Endothelial cell of umbilical vein (primary cell): ENCODE measurements at regions of chr2 and their contacts with region 1.

Region 1: DNA sequence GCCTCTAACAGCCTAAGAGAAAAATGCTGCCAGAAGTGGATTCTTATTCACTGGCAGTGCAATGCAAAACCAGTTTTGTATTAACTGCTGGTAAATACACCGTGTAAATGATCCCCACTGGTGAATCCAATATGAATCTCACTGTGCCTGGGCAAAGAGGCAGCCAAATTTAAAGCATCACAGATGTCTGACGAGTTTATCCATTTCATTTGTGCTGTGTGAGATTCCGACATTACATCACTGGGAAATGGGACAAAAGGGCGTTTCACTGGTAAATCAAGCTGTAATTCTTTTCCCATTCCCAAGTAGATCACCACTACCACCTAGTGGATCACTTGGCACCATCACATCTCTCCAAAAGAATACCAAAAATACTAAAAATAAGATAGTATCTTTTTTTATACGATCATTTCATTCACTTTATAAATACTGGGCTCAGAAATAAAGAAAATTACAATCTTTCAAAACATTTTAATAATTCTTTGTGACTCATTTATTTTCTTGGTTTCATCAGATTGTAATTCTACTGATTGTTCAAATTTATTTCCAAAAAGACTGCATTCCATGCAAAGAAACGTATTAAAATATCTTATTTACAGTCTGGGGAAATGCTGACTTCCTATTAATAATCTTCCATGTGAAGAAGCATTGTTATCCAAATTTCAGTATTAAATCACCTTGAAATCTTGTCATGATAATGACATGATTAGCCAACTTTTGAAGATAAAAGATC is 125.6 kb downstream of the GRB14 start:
- DNase-seq: peak; percentile 44
- H3K4me3 ChIP-seq: no peak overlapping the region
- H3K27ac ChIP-seq: no peak overlapping the region
- H3K4me1 ChIP-seq: peaks cover 7% of the 10 kb centered on the region
- H3K27me3 ChIP-seq: no peaks in the 10 kb centered on the region
- CTCF ChIP-seq: peak; percentile 34 to 41
- POLR2A ChIP-seq: no peak

Region 2: DNA sequence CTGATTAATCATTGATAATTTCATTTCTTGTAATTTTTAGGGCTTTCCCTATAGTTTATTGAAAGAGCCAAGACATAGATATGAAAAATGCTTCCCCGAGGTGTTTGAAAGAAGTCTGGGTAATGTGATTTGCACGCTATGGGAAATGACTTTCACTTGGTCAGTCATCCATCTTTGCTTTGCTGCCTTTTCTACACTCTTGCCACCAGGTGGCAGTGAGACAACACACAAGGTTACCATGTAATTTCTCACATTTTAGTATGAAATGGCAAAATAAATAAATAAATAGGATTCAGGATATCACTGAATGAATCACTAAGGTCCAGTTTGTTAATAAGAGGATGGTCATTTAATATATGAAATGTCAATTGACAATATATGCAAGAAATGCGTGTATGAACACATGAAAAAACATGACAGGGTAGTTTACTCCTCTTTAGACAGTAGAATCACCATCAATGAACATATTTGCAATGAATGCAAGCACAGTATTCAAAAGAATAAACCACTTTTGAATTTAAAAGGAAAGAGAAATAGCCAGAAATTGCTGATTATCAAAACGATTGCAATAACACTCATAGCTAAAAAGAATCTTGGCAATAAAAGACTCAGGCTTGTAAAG is 1604.9 kb before region 1 on chr2:
- CTCF ChIA-PET with region 1: interaction called, 6 read pairs
- POLR2A ChIA-PET with region 1: no interaction called
- dilution Hi-C with region 1: no loop called
- intact Hi-C with region 1: loop called (anchors 1 kb)
- DNase-seq: peak; percentile 65
- H3K4me3 ChIP-seq: no peak overlapping the region
- H3K27ac ChIP-seq: no peak overlapping the region
- H3K4me1 ChIP-seq: no peaks in the 10 kb centered on the region
- H3K27me3 ChIP-seq: no peaks in the 10 kb centered on the region
- CTCF ChIP-seq: peak; percentile 68 to 77
- POLR2A ChIP-seq: no peak

Region 3: GRCh38 chr2:163171786-163172531 is 1323.7 kb before region 1 on chr2:
- CTCF ChIA-PET with region 1: interaction called, 5 read pairs
- POLR2A ChIA-PET with region 1: no interaction called
- dilution Hi-C with region 1: no loop called
- intact Hi-C with region 1: loop called (anchors 1 kb)
- DNase-seq: no peak
- H3K4me3 ChIP-seq: no peak overlapping the region
- H3K27ac ChIP-seq: no peak overlapping the region
- H3K4me1 ChIP-seq: no peaks in the 10 kb centered on the region
- H3K27me3 ChIP-seq: no peaks in the 10 kb centered on the region
- CTCF ChIP-seq: no peak
- POLR2A ChIP-seq: no peak

Region 4: DNA sequence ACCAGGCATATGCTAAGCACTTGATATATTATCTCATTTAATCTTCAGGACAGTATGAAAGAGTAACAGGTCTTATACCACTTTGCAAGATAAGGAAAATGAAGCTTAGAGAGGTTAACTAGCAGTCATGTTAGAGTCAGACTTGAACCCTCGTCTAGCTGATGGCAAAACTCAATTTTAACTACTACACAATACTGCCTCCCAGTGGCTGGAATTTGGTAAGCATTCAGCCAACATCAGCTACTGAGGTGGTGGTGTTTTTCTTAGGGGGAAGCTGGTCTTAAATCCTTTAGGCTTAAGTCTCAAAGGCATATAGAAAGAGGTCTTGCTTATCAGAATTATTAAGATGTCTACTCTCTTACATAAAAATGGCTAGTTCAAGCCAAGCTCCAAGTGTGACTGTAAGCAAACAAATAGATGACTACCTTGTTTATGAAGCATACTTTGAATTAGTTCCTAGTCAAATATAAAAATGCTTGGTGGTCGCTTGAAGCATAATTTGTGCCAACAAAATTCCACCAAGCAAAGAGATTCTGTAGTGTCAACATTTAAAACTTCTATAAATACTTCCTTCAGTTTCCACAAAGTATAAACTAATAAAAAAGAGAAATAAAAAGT is 434.4 kb before region 1 on chr2:
- CTCF ChIA-PET with region 1: interaction called, 3 read pairs
- POLR2A ChIA-PET with region 1: no interaction called
- dilution Hi-C with region 1: no loop called
- intact Hi-C with region 1: loop called (anchors 2 kb)
- DNase-seq: peak; percentile 61
- H3K4me3 ChIP-seq: no peak overlapping the region
- H3K27ac ChIP-seq: no peak overlapping the region
- H3K4me1 ChIP-seq: no peaks in the 10 kb centered on the region
- H3K27me3 ChIP-seq: no peaks in the 10 kb centered on the region
- CTCF ChIP-seq: peak; percentile 53 to 58
- POLR2A ChIP-seq: no peak

Region 5: DNA sequence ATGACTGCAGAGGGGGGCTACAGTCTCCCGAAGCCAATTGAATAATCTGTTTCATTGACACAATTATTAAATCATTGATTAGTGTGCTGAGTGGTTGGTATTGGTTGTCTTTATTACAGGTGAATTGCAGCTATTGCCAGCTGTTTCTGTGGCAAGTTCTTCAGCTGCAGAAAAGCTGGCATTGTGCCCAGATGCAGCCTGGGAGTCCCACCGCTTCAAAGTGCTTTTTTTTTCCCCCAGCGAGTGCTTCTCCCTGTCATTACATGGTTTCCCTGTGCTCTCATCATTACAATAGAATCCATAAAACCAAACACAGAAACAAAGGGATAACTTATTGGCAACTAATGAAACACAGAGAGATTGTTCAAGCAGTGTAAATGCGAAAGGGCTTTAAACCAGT is 39.0 kb before region 1 on chr2:
- CTCF ChIA-PET with region 1: no interaction called
- POLR2A ChIA-PET with region 1: no interaction called
- dilution Hi-C with region 1: no loop called
- intact Hi-C with region 1: no loop called
- DNase-seq: peak; percentile 8
- H3K4me3 ChIP-seq: no peak overlapping the region
- H3K27ac ChIP-seq: no peak overlapping the region
- H3K4me1 ChIP-seq: no peaks in the 10 kb centered on the region
- H3K27me3 ChIP-seq: peaks cover 5 to 6% of the 10 kb centered on the region in 2 experiments
- CTCF ChIP-seq: no peak
- POLR2A ChIP-seq: no peak

Region 6: DNA sequence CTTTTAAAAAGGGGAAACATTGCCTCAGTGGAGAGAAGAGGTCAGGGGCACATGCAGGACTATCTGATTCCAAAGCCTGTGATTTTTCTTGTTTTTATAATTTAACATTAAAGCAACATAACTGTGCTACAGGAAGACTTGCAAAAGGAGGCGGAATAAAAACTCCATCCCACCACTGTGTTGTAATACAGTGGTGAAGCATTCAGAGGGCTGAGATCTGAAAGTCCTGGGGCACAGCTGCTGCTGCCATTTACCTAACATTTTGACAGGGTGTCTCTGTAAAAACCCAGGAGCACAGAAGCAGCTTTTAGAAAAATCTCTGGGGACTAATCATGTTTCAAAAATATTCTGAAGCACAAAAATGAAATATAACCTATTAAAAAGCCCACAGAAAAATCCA is 28.1 kb after region 1 on chr2:
- CTCF ChIA-PET with region 1: no interaction called
- POLR2A ChIA-PET with region 1: no interaction called
- dilution Hi-C with region 1: no loop called
- intact Hi-C with region 1: no loop called
- DNase-seq: no peak
- H3K4me3 ChIP-seq: no peak overlapping the region
- H3K27ac ChIP-seq: no peak overlapping the region
- H3K4me1 ChIP-seq: peaks cover 7% of the 10 kb centered on the region
- H3K27me3 ChIP-seq: no peaks in the 10 kb centered on the region
- CTCF ChIP-seq: no peak
- POLR2A ChIP-seq: no peak

Region 7: DNA sequence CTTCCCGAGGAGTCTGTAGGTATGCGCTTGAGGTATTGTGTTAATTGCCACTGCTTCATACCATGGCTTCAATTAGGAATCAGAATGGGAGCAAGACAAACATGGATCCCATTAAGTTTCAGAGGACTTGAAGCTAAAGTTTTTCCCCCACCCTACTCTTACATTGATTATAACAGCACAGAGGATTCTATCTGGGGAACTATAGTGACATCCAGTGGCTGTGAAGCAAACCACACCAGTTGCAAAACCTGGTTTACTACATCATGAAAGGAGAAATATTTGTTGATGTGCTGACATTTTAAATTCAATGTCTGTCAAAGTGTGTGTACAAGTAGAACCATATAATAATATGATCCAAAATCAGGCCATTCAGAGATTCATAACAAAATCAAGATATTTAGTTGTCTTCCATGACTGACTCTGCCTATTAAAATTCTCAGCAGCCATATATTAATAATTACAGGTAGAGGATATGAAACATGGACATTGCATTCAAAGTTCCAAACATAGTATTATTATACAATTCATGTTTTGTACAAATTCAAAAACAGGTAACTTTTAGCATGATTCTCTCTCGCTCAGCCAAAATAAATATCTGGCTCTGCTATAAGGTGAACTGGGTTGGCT is 42.7 kb after region 1 on chr2:
- CTCF ChIA-PET with region 1: interaction called, 21 read pairs
- POLR2A ChIA-PET with region 1: no interaction called
- dilution Hi-C with region 1: no loop called
- intact Hi-C with region 1: no loop called
- DNase-seq: peak; percentile 56
- H3K4me3 ChIP-seq: no peak overlapping the region
- H3K27ac ChIP-seq: no peak overlapping the region
- H3K4me1 ChIP-seq: peaks cover 5% of the 10 kb centered on the region
- H3K27me3 ChIP-seq: no peaks in the 10 kb centered on the region
- CTCF ChIP-seq: peak; percentile 58 to 68
- POLR2A ChIP-seq: no peak